RWPE1 (cell line): ENCODE measurements at regions of chr12 and their contacts with region 1.

Region 1: DNA sequence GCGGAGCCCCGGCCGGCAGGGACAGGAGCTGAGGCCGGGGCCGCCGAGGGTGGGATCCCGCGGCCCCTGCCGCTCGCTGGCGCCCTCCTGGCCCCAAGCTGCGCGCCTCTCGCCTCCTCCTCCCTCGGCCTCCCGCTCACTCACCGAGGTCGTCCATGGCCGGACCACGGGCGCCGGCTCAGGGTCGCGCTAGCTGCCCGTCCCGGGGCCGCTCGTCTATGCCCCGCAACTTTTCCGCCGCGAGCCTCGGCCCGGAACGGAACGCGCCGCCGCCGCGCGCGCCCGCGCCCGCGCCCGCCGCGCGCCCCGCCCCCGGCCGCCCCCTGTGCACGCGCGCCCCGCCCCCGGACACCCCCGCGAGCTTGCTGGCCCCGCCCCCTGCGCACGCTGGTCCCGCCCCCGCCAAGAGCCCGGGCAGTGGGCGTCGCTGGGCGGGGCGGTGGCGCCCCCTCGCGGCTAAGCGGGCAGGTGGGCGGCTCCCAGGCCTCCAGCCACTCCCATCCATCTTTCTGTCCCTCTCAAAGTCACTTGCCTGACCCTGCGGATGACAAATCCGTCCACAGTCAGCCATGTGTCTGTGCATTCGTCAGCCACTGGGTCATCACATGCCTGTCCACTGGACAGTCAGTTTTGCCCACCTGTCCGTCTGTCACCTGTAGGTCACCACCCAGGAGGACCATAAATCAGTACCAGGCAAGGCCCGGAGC is at the start of gene PXN:
- DNase-seq: peak; percentile 90
- H3K27ac ChIP-seq: peak within 1 kb of the TSS; percentile 96
- CTCF ChIP-seq: peak; percentile 93

Region 2: DNA sequence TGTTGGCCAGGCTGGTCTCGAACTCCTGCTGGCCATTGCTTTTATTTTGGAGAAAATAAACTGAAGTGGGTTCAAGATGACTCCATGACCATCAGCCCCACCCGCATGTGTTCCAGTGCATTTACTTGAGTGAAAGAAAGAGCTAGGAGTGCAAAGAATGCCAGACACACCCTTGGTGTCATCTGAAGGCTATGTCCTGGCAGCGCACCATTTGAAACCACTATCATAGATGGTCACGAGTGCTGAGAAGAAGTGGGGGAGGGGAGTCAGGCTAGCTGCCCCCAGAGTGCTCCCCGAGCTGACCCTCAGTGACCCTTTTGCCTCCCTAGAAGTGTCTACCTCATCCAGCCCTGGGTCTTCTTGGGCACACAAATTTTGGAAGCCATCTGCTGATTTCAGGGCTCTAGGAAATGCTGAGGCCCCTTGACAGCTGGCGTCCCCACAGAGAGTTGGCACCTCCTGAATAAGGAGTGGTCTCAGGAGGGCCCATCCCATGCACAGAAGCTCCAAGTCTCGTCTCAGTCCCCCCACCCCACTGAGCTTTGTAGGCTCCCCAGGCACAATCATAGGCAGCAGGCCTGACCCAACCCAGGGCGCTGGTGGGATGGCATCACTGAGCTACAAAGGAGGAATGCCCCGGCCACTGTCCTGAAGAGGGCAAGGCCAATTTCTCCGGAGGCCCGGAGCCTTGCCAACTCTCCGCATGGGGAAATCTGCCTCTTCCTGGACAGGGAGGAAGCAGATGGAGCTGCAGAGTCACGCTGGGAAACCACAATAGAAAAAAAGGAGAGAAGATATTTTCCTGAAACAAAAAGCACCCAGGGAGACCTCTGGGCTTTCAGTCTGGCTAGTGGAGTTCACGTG is 28.0 kb before region 1 on chr12:
- CTCF ChIA-PET with region 1: interaction called, 142 read pairs
- POLR2A ChIA-PET with region 1: interaction called, 64 read pairs
- DNase-seq: peak; percentile 85
- H3K27ac ChIP-seq: peak overlapping the region; percentile 100
- CTCF ChIP-seq: no peak

Region 3: DNA sequence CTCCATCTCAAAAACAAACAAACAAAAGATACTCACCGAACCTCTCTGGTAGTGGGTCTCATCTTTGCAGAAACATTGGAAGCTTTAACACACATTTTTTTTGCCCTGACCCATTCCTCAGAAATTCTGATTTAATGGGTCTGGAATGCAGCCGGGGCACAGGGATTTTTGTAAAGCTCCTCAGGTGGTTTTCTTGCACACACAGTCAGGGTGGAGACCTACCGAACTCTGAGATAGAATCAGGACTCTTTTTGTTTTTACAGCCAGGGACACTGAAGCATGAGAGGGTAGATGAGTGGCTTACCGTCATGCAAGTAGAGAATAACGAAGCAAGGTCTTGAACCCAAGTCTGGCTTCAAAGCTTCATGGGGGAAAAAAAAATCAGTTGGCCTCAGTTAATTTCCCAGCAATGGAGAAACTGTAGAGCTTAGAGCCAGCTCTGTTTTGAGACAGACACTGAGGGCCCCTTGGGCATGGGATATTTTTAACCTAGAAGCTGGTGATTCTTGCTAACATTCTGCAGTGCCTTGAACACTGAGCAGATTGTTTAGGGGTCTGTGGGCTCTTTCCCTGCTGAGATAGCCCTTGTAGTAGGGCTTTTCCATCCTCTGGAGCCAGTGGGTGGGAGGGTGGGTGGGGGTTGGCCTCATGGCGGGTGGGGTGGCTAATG is 21.3 kb after region 1 on chr12:
- CTCF ChIA-PET with region 1: interaction called, 10 read pairs
- POLR2A ChIA-PET with region 1: interaction called, 3 read pairs
- DNase-seq: no peak
- H3K27ac ChIP-seq: no peak overlapping the region
- CTCF ChIP-seq: no peak